ENCODE measurements at regions of chr14 and their contacts with region 1.

Region 1: DNA sequence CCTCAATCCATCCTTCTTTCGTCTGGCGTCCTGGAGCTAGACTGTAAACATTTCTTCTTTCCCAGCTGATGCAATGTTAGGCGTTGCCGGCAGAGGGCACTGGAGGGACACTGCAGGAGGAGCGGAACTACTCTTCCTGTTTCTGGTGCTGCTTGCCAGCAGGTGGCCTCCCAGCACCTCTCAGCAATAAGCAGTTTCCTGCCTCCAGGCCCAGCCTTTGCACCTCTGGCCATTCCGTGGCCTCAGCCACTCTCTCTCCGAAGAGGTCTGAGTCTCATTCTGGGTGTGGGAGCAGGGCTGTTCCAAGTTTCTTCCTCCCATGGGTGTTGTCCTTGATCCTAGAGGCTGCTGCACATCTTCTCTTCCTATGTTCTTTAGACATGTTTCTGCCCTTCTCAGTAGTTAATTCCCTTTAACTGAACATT is 7.5 kb upstream of the ASPG start:
- DNase-seq: peak; percentile 29
- H3K4me3 ChIP-seq: no peak overlapping the region
- H3K27me3 ChIP-seq: no peaks in the 10 kb centered on the region
- CTCF ChIP-seq: peak; percentile 100

Region 2: GRCh38 chr14:104064003-104064402 is 14.0 kb before region 1 on chr14:
- CTCF ChIA-PET with region 1: interaction called, 14 read pairs
- POLR2A ChIA-PET with region 1: no interaction called
- DNase-seq: no peak
- H3K4me3 ChIP-seq: no peak overlapping the region
- H3K27me3 ChIP-seq: no peaks in the 10 kb centered on the region
- CTCF ChIP-seq: no peak

Region 3: DNA sequence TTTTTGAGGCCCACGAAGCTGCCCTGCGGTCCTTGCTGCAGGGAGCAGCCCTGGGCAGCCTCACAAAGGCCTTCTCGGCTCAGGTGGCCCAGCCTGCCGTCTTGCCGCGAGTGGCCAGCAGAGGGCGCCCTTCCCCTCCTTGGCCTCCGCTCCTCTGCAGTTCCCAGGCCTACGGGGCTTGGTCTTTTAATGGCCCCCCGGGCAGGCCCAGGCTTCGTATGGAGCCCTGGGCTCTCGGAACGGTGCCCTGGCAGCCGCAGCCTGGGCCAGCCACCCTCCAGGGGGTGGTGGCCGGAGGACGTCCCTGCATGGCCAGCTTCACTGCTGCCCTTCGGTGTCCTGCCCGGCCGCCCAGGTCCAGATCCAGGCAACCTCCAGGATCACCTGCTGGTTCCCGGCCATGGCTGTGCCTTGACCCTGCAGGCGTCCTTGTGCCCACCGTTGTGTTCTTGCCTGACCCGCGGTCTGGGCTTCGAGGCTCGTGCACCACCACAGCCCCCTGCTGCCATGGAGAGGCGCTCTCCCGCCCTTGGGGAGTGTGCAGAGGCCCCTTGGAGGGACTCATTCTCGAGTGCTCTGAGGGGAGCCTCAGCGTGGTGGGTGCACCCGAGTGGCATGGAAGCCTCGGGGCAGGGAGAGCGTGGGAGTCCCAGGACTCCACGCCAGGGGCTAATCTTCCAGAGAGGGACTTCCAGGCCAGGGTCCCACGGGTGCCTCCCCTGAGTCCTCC is 16.8 kb after region 1 on chr14:
- CTCF ChIA-PET with region 1: interaction called, 35 read pairs
- POLR2A ChIA-PET with region 1: no interaction called
- DNase-seq: no peak
- H3K4me3 ChIP-seq: no peak overlapping the region
- H3K27me3 ChIP-seq: no peaks in the 10 kb centered on the region
- CTCF ChIP-seq: peak; percentile 90

Region 4: DNA sequence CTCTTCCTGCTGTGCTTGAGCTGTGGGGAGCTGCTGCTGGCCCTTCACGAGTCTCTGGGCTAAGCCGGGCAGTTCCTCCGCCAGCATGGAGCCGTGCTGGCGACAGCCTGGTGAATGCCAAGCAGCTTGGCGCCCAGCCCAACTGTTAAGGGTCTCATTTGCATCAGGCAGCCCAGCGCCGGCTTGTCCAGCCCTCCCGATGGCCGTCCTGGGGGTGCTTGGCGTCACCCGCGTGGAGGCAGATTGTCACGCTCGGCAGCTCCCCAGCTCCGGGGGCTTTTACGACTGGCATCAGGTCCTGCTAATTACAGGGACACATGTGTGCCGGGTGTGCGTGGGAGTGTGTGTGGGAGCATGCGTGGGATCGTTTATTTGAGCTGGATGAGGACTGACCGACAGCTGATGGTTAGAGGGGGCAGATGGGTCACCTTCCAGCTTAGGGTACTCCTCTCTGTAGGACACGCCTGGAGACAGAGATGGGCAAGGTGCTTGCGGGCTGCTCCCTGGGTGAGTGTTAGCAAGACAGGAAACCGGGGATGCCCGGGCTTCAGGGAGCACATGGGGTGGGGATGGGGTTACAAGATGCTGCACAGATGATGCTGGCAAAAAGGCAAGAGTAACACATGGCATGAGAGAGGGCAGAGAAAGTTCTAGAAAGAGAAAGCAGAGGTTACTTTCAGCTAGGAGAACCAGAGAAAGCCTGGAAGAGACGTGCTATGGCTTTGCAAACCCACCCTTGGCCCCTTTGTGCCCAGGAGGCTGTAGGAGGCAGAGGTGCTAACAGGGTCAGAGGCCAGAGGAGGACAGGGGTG is 124.4 kb after region 1 on chr14:
- CTCF ChIA-PET with region 1: no interaction called
- POLR2A ChIA-PET with region 1: no interaction called
- DNase-seq: no peak
- H3K4me3 ChIP-seq: no peak overlapping the region
- H3K27me3 ChIP-seq: no peaks in the 10 kb centered on the region
- CTCF ChIP-seq: no peak

Region 5: DNA sequence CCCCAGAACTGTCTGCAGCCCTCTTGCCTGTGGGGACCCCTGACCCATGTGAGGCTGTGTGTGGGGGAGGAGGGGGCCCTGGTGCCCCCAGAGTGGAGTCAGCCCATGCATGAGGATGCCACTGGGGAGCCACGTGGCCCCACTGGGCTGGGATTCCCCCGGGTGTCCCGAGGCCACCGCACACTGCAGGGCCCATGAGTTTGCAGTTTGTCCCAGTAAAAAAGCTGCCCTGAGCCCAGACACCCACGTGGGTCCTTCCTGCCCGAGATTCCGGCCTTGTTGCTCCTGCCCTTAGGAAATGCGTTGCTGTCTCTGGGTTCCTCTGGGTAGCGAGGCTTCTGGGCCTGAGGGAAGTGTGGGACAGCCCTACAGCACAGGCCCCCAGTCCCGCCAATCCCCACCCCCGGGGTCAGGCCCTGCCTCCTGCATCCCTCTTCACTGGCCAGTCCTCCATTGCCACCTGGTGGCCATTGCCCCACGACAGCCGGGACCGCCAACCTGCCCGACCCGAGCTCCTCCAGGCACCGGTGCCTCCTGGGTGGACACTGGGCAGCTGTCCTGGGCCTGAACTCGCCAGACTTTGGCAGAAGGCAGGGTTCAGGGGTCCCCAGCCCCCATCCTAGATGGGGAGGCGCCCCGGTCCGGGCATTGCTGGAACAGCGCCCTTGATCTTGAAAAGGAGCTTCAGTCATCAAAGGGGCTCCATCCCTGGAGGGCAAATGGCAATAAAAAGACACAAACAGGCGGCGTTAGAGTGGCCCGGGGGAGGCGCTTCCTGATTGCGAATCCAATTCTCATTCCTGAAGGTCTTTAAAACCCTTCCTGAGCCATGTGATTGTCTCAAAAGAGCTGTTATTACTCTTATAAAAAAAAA is 485.9 kb after region 1 on chr14:
- CTCF ChIA-PET with region 1: interaction called, 14 read pairs
- POLR2A ChIA-PET with region 1: no interaction called
- DNase-seq: no peak
- H3K4me3 ChIP-seq: no peak overlapping the region
- H3K27me3 ChIP-seq: no peaks in the 10 kb centered on the region
- CTCF ChIP-seq: peak; percentile 86

Region 6: DNA sequence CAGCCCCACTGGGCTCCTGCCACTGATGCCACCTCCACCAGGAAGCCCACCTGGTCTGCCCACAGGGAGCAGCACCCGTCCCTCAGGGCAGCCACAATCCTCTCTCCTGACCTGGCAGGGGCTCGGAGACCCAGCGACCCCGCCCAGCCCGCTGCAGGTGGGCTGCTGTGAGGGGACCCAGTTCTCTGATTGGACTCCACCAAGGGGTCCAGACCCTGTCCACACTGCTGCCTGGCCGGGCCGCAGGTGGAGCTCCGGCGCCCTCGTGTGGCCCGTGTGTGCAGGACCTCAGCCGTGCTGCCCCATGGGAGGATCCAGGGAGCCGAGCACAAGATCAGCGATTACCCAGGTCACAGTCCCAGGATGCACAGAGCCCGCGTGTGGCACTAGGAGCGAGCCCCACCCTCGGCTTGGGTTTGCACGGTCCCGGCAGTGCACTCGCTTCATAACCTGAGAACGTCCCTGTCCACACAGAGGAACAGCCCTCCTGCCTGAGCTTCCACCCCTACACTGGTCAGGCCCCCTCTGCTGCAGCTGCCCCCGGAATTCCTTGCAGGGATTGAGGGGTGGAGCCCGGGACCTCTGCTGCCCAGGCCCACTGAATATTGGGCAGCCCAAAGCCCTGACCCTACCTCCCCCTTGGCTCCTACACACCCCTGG is 562.0 kb after region 1 on chr14:
- CTCF ChIA-PET with region 1: interaction called, 15 read pairs
- POLR2A ChIA-PET with region 1: no interaction called
- DNase-seq: no peak
- H3K4me3 ChIP-seq: no peak overlapping the region
- H3K27me3 ChIP-seq: peaks cover 2% of the 10 kb centered on the region; the same call in 1 of the 2 replicates
- CTCF ChIP-seq: peak; percentile 98